HCT116 (cell line): ENCODE measurements at regions of chr7 and their contacts with region 1.

Region 1: DNA sequence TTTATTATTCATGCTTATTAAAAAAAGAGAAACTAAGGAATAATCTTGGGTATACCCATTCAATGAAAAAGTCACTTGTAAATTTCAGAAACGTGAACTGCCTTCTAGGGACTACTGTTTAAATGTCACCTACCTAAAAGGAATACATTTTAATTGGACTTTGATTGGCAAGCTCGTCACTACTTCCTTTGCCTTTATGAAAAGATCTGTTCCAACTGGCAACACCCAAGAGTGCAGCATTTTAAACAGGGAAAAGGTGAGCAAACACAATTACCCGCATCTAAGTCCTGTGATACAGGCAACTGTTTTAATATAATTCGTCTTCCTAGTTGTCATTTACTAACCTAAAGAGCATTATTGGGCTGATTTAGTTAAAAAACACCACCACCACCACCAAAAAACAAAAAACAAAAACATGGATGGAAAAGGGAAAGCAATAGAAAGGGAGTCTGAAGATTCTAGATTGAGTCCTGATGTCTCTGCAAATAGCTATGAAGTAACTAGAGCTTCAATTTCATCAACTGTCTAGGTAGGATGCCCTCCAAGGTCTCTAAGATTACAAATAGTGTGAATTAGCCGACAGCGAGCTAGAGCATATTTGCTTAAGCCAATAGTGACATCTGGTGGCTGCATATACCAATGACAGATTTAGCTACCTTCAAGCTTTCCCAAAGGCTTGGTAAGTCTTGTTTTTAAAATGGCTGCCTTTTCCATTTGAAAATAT is 33.8 kb upstream of the ICA1 start:
- DNase-seq: peak; percentile 89
- ATAC-seq: peak; percentile 98
- H3K4me3 ChIP-seq: no peak overlapping the region
- H3K27ac ChIP-seq: no peak overlapping the region
- H3K4me1 ChIP-seq: no peaks in the 10 kb centered on the region
- H3K27me3 ChIP-seq: no peaks in the 10 kb centered on the region
- CTCF ChIP-seq: peak; percentile 67 to 74 (median 70)
- POLR2A ChIP-seq: no peak
- RAD21 ChIP-seq: peak; percentile 95

Region 2: GRCh38 chr7:7424151-7424873 is 871.5 kb before region 1 on chr7:
- CTCF ChIA-PET with region 1: interaction called, 19 read pairs
- POLR2A ChIA-PET with region 1: no interaction called
- RAD21 ChIA-PET with region 1: interaction called in 1 of 2 experiments, 6 read pairs
- intact Hi-C with region 1: loop called (anchors 1 kb)
- DNase-seq: peak; percentile 66
- ATAC-seq: peak; percentile 96
- H3K4me3 ChIP-seq: peak overlapping the region; percentile 23 to 42
- H3K27ac ChIP-seq: no peak overlapping the region
- H3K4me1 ChIP-seq: peaks cover 0 to 3% of the 10 kb centered on the region in 2 experiments; a peak in 2 of 4 replicates
- H3K27me3 ChIP-seq: no peaks in the 10 kb centered on the region
- CTCF ChIP-seq: peak; percentile 85 to 91 (median 89)
- POLR2A ChIP-seq: no peak
- RAD21 ChIP-seq: peak; percentile 99

Region 3: GRCh38 chr7:7681179-7681935 is 614.4 kb before region 1 on chr7:
- CTCF ChIA-PET with region 1: interaction called, 23 read pairs
- POLR2A ChIA-PET with region 1: no interaction called
- RAD21 ChIA-PET with region 1: interaction called in 1 of 2 experiments, 6 read pairs
- intact Hi-C with region 1: loop called (anchors 5 kb)
- DNase-seq: peak; percentile 44
- ATAC-seq: peak; percentile 84
- H3K4me3 ChIP-seq: no peak overlapping the region
- H3K27ac ChIP-seq: no peak overlapping the region
- H3K4me1 ChIP-seq: 0 out of 4 replicates have a peak, but pooled peaks cover 0 to 4% of the 10 kb centered on the region in 2 experiments
- H3K27me3 ChIP-seq: no peaks in the 10 kb centered on the region
- CTCF ChIP-seq: peak; percentile 41 to 75 (median 66); a peak in 5 of 6 replicates
- POLR2A ChIP-seq: no peak
- RAD21 ChIP-seq: peak; percentile 80

Region 4: DNA sequence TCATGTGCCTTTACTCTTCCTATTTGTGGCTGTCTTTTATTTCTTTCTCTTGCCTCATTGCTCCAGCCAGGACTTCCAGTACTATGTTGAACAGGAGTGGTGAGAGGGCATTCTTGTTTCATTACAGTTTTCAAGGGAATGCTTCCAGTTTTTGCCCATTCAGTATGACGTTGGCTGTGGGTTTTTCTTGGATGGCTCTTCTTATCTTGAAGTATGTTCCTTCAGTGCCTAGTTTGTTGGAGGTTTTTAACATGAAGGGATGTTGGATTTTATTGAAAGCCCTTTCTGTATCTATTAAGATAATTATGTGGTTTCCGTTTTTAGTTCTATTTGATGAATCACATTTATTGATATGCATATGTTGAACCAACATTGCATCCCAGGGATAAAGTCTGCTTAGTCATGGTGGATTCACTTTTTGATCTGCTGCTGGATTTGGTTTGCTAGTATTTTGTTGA is 230.4 kb before region 1 on chr7:
- CTCF ChIA-PET with region 1: no interaction called
- POLR2A ChIA-PET with region 1: no interaction called
- RAD21 ChIA-PET with region 1: no interaction called
- intact Hi-C with region 1: no loop called
- DNase-seq: no peak
- ATAC-seq: peak; percentile 52; the same call in 1 of the 2 replicates
- H3K4me3 ChIP-seq: no peak overlapping the region
- H3K27ac ChIP-seq: no peak overlapping the region
- H3K4me1 ChIP-seq: peaks cover 0 to 10% of the 10 kb centered on the region in 2 experiments; a peak in 2 of 4 replicates
- H3K27me3 ChIP-seq: no peaks in the 10 kb centered on the region
- CTCF ChIP-seq: no peak
- POLR2A ChIP-seq: no peak
- RAD21 ChIP-seq: no peak

Region 5: GRCh38 chr7:8149222-8149621 is 146.6 kb before region 1 on chr7:
- CTCF ChIA-PET with region 1: no interaction called
- POLR2A ChIA-PET with region 1: no interaction called
- RAD21 ChIA-PET with region 1: no interaction called
- intact Hi-C with region 1: no loop called
- DNase-seq: no peak
- ATAC-seq: no peak
- H3K4me3 ChIP-seq: no peak overlapping the region
- H3K27ac ChIP-seq: no peak overlapping the region
- H3K4me1 ChIP-seq: no peaks in the 10 kb centered on the region
- H3K27me3 ChIP-seq: no peaks in the 10 kb centered on the region
- CTCF ChIP-seq: no peak
- POLR2A ChIP-seq: no peak
- RAD21 ChIP-seq: no peak

Region 6: GRCh38 chr7:8217200-8218068 is 78.4 kb before region 1 on chr7:
- CTCF ChIA-PET with region 1: interaction called, 5 read pairs
- POLR2A ChIA-PET with region 1: no interaction called
- RAD21 ChIA-PET with region 1: interaction called in 1 of 2 experiments, 4 read pairs
- intact Hi-C with region 1: loop called (anchors 5 kb)
- DNase-seq: peak; percentile 54
- ATAC-seq: peak; percentile 69
- H3K4me3 ChIP-seq: no peak overlapping the region
- H3K27ac ChIP-seq: no peak overlapping the region
- H3K4me1 ChIP-seq: no peaks in the 10 kb centered on the region
- H3K27me3 ChIP-seq: no peaks in the 10 kb centered on the region
- CTCF ChIP-seq: peak; percentile 34 to 83 (median 49); a peak in 4 of 6 replicates
- POLR2A ChIP-seq: no peak
- RAD21 ChIP-seq: peak; percentile 74